Activated CD8-positive, alpha-beta memory T cell treated with anti-CD3 and anti-CD28 coated beads, Interleukin-2, amount 10 ng/mL, durations not matched to agents 7 days and 5 days (primary cell): ENCODE measurements at regions of chr19 and their contacts with region 1.

Region 1: GRCh38 chr19:16041299-16041990 is 34.9 kb upstream of the TPM4 start:
- DNase-seq: peak; percentile 81
- ATAC-seq: peak; percentile 86
- H3K4me3 Mint-ChIP-seq: no peak overlapping the region
- H3K27ac Mint-ChIP-seq: no peak overlapping the region
- H3K4me1 Mint-ChIP-seq: peaks cover 17% of the 10 kb centered on the region
- H3K27me3 Mint-ChIP-seq: peaks cover 11% of the 10 kb centered on the region

Region 2: DNA sequence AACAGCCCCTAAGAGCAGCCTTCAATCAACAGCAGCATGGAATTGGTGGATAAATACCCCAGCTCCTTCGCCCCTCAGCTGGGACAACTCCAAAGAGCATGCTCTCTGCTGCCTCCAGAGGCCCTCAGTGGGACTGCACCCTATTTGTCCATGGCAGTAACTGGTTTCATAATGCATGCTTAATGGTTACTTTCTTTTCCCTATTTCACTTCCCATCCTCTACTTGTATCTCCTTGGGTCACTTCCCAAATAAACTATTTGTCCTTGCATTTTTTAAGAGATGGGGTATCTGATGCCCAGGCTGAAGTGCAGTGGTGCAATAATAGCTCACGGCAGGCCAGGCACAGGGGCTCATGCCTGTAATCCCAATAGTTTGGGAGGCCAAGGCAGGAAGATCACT is 21.3 kb after region 1 on chr19:
- CTCF ChIA-PET with region 1: interaction called, 83 read pairs
- DNase-seq: peak; percentile 78
- ATAC-seq: peak; percentile 48
- H3K4me3 Mint-ChIP-seq: no peak overlapping the region
- H3K27ac Mint-ChIP-seq: peak overlapping the region; percentile 40
- H3K4me1 Mint-ChIP-seq: peaks cover 33% of the 10 kb centered on the region
- H3K27me3 Mint-ChIP-seq: peaks cover 10% of the 10 kb centered on the region

Region 3: GRCh38 chr19:16082556-16082955 is 41.1 kb after region 1 on chr19:
- CTCF ChIA-PET with region 1: interaction called, 27 read pairs
- DNase-seq: no peak
- ATAC-seq: no peak
- H3K4me3 Mint-ChIP-seq: peak overlapping the region; percentile 11
- H3K27ac Mint-ChIP-seq: peak overlapping the region; percentile 51
- H3K4me1 Mint-ChIP-seq: peaks cover 75% of the 10 kb centered on the region
- H3K27me3 Mint-ChIP-seq: no peaks in the 10 kb centered on the region

Region 4: DNA sequence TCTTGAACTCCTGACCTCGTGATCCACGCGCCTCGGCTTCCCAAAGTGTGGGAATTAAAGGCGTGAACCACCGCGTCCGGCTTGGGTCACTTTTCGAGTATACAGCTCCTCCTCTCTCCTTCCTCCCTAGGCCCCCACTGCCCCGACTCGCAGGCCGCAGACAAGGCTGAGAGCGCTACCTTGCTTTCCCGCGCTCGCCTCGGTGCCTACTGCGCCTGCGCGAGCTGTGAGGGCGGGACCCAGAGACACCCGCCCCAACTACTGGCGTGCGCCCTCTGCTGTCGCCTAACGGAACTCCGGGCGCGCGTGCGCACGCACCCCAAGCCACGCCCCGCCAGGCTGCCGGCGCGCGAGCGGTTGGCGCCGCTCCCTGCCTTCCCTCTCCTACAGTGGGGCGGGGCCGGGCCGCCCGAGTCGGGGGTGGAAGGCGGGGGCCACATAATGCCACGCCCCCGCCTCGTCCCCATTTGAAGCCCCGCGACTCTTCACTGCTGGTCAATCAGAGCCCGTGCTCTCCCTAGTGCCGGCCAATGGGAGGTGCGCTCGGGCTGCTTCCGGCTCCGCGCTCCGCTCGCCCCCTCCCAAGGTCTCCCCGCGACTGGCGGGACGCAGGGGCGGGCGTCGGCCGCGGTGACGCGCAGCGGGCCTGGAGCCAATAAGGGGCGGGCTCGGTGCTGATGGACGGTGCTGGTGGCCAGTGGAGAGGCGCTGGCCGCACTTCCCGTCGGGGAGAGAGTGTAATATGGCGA is 69.9 kb after region 1 on chr19 and contains the start of gene RAB8A:
- CTCF ChIA-PET with region 1: interaction called, 18 read pairs
- DNase-seq: peak; percentile 99
- ATAC-seq: peak; percentile 94
- H3K4me3 Mint-ChIP-seq: peak within 1 kb of the TSS; percentile 92
- H3K27ac Mint-ChIP-seq: peak within 1 kb of the TSS; percentile 97
- H3K4me1 Mint-ChIP-seq: peaks cover 40% of the 10 kb centered on the region
- H3K27me3 Mint-ChIP-seq: no peaks in the 10 kb centered on the region
- total RNA-seq, gene RAB8A: 204 to 271 TPM